SK-N-SH (cell line): ENCODE measurements at regions of chr17 and their contacts with region 1.

Region 1: DNA sequence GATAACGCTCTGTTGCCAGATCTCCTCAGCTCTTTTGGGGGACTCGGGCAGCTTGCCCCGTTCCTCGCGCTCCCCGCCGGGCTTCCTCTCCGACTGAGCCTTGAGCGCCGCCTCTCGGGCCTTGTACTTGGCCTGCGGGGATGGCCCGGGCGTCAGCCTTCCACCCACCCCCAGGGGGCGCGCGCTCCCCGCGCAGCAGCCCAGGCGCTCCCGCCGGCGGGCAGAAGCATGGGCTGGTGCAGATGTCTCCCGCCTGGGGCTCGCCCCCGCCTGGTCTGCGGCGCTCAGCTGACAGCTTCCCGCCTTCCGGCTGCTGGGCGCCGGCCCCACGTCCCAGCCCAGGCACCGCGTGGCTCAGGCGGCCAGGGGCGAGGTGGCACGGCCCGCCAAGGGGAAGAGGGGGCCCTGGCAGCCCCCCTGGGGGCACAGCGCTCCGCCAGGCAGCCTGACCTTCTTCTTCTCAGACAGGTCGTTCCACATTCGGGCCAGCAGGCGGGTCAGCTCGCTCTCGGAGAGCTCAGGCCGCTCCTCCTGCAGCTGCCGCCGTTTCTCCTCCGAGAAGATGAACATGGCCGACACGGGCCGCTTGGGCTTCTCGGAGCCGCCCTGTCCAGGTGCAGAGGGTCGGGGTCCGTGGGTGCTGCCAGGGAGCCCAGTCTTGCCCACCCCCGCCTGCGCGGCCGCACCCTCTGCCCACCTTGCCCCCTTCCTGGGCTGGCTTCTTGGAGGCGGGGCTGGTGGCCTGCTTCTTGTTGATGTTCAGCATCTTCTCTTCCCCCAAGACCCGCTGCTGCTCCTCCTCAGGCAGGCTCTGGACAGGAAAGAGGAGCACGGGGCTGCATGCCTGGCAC is 8.9 kb downstream of the UBTF start:
- DNase-seq: peak; percentile 92
- H3K4me3 ChIP-seq: peak overlapping the region in 1 of 2 experiments; percentile 44; a peak in 1 of 4 replicates
- H3K27ac ChIP-seq: no peak overlapping the region
- H3K4me1 ChIP-seq: 0 out of 4 replicates have a peak, but pooled peaks cover 0 to 4% of the 10 kb centered on the region in 2 experiments
- H3K27me3 ChIP-seq: no peaks in the 10 kb centered on the region
- CTCF ChIP-seq: peak; percentile 62
- EP300 ChIP-seq: no peak
- RAD21 ChIP-seq: peak; percentile 70

Region 2: GRCh38 chr17:44199553-44200477 is 10.8 kb before region 1 on chr17 and contains the start of gene ATXN7L3:
- CTCF ChIA-PET with region 1: interaction called, 61 read pairs
- POLR2A ChIA-PET with region 1: interaction called, 3 read pairs
- DNase-seq: peak; percentile 99
- H3K4me3 ChIP-seq: peak within 1 kb of the TSS; percentile 79 to 83
- H3K27ac ChIP-seq: peak within 1 kb of the TSS; percentile 85 to 96
- H3K4me1 ChIP-seq: peaks cover 16 to 30% of the 10 kb centered on the region in 2 experiments
- H3K27me3 ChIP-seq: no peaks in the 10 kb centered on the region
- CTCF ChIP-seq: no peak
- EP300 ChIP-seq: no peak
- RAD21 ChIP-seq: no peak
- polyA plus RNA-seq, gene ATXN7L3: 47.7 and 57.9 TPM in 2 replicates

Region 3: GRCh38 chr17:44324571-44325275 is 114.2 kb after region 1 on chr17 and contains the start of gene SLC25A39:
- CTCF ChIA-PET with region 1: interaction called, 57 read pairs
- POLR2A ChIA-PET with region 1: no interaction called
- DNase-seq: peak; percentile 98
- H3K4me3 ChIP-seq: peak within 1 kb of the TSS; percentile 95 to 98
- H3K27ac ChIP-seq: peak within 1 kb of the TSS; percentile 48 to 60; a peak in 2 of 4 replicates
- H3K4me1 ChIP-seq: peaks cover 0 to 10% of the 10 kb centered on the region in 2 experiments; a peak in 1 of 4 replicates
- H3K27me3 ChIP-seq: no peaks in the 10 kb centered on the region
- CTCF ChIP-seq: no peak
- EP300 ChIP-seq: no peak
- RAD21 ChIP-seq: peak; percentile 11; the same call in 1 of the 2 replicates
- polyA plus RNA-seq, gene SLC25A39: 106 and 131 TPM in 2 replicates

Region 4: DNA sequence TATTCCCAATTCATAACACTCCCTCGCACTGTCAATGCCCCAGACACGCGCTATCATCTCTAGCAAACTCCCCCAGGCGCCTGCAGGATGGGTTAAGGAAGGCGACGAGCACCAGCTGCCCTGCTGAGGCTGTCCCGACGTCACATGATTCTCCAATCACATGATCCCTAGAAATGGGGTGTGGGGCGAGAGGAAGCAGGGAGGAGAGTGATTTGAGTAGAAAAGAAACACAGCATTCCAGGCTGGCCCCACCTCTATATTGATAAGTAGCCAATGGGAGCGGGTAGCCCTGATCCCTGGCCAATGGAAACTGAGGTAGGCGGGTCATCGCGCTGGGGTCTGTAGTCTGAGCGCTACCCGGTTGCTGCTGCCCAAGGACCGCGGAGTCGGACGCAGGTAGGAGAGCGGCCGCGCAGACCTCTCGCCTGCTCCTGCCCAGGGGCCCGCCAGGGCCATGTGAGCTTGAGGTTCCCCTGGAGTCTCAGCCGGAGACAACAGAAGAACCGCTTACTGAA is 134.4 kb after region 1 on chr17 and contains the start of gene GRN:
- CTCF ChIA-PET with region 1: interaction called, 20 read pairs
- POLR2A ChIA-PET with region 1: interaction called, 3 read pairs
- DNase-seq: peak; percentile 97
- H3K4me3 ChIP-seq: peak within 1 kb of the TSS; percentile 83 to 98
- H3K27ac ChIP-seq: peak within 1 kb of the TSS; percentile 40 to 66; a peak in 3 of 4 replicates
- H3K4me1 ChIP-seq: peaks cover 0 to 13% of the 10 kb centered on the region in 2 experiments; a peak in 1 of 4 replicates
- H3K27me3 ChIP-seq: no peaks in the 10 kb centered on the region
- CTCF ChIP-seq: no peak
- EP300 ChIP-seq: peak; percentile 53 to 60; a peak in 2 of 4 replicates
- RAD21 ChIP-seq: no peak
- polyA plus RNA-seq, gene GRN: 360 and 442 TPM in 2 replicates

Region 5: GRCh38 chr17:44350733-44351226 is 140.2 kb after region 1 on chr17:
- CTCF ChIA-PET with region 1: interaction called, 20 read pairs
- POLR2A ChIA-PET with region 1: interaction called, 3 read pairs
- DNase-seq: peak; percentile 96
- H3K4me3 ChIP-seq: peak overlapping the region in 1 of 2 experiments; percentile 26; a peak in 1 of 4 replicates
- H3K27ac ChIP-seq: no peak overlapping the region
- H3K4me1 ChIP-seq: peaks cover 0 to 7% of the 10 kb centered on the region in 2 experiments; a peak in 1 of 4 replicates
- H3K27me3 ChIP-seq: no peaks in the 10 kb centered on the region
- CTCF ChIP-seq: peak; percentile 74
- EP300 ChIP-seq: no peak
- RAD21 ChIP-seq: peak; percentile 79